ENCODE measurements at regions of chr1 and their contacts with region 1.

Region 1: DNA sequence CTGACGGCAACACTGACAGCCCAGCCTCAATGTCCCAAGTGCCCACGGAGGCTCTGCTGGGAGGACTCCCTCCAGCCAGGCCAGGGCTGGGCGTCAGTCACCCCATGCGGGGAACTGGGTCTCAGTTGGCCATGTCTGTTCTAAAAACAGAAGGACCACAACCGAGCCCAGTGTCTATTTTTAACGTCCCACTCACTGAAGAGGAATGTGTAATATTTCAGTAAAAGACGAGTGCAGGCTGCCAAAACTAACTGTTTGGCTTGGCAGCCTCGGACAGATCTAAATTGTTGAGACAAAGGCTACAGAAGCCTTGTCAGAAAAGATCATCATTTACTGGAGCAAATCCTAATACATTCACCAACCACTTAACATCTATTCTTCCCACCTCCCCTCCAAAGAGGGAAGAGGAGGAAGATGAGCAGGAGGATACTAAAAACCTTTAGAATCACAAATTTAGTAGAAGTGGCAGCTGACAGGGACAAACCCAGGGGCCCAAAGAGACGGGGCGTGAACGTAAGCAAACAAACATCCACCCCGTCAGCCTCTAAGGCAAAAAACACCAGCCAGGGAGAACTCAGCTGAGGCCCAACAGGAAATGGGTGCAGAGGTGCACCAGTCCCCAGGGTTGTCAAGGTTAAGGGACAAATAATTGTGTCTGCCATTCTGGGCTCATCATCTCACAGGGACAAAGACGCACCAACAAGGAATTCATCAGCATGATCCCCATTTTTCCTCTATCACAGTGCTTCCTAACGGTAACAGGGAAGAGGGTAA is 18.7 kb downstream of the C1orf198 start:
- DNase-seq: peak; percentile 89 to 90
- ATAC-seq: peak; percentile 91
- H3K4me3 ChIP-seq: no peak overlapping the region
- H3K27ac ChIP-seq: peak overlapping the region; percentile 88 to 99
- H3K4me1 ChIP-seq: peaks cover 9 to 14% of the 10 kb centered on the region in 2 donors
- H3K27me3 ChIP-seq: no peaks in the 10 kb centered on the region

Region 2: DNA sequence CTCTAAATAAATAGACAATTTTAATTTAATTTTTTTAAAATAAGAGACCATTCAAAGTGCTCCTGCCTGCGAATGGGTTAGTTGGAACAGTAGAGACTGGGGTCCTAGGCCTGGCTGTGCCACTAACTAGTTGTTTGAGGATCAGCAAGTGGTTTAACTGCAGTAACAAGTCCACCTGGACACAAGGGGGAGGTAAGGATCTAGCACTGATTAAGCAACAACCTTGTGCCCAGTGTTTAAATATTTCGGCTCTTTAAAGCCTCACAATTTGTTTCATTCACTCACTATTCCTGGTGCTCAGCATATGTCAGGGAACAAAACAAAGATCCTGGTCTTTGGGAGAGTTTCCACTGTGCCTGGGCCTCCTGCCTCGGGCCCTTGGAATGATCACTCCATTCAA is 134.1 kb before region 1 on chr1:
- intact Hi-C with region 1: no loop called
- DNase-seq: no peak
- ATAC-seq: no peak
- H3K4me3 ChIP-seq: no peak overlapping the region
- H3K27ac ChIP-seq: no peak overlapping the region
- H3K4me1 ChIP-seq: no peaks in the 10 kb centered on the region
- H3K27me3 ChIP-seq: no peaks in the 10 kb centered on the region

Region 3: GRCh38 chr1:230792691-230793665 is 56.7 kb before region 1 on chr1:
- intact Hi-C with region 1: no loop called
- DNase-seq: no peak
- ATAC-seq: no peak
- H3K4me3 ChIP-seq: no peak overlapping the region
- H3K27ac ChIP-seq: no peak overlapping the region
- H3K4me1 ChIP-seq: no peaks in the 10 kb centered on the region
- H3K27me3 ChIP-seq: no peaks in the 10 kb centered on the region

Region 4: DNA sequence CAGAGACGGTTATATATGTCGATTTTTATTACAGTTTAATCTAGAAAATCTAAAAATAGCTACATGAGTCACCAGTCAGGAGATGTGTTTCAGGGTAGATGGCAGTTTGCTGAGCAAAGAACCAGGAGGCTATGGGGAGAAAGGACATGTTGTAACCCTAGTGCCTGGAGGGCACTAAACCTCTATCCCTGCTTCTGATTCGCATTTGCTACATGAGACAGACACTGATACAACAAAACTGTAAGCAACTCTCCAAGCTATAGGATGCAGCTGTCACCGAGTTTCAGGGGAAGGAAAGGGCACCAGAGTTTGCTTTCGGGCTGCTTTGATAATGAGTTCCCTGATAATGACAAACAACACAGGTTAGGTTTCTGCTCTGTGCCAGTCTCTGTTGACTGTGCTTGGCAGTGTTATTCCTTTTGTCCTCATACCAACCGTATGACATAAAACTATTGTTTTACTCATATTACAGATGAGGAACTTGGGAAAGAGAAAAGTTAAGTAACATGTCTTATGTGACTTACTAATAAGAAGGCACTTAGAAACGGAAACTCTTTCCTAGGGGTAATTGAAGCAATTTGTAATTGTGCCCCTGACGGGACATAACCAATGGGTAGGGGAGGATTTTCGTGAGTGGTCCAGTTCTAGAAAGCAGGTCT is 24.4 kb before region 1 on chr1:
- intact Hi-C with region 1: loop called in 1 of 2 experiments (anchors 2 kb)
- DNase-seq: no peak
- ATAC-seq: peak; percentile 65
- H3K4me3 ChIP-seq: no peak overlapping the region
- H3K27ac ChIP-seq: peak overlapping the region; percentile 79 to 96
- H3K4me1 ChIP-seq: peaks cover 0 to 6% of the 10 kb centered on the region in 2 donors
- H3K27me3 ChIP-seq: no peaks in the 10 kb centered on the region

Measured in aorta (tissue), 5 donors.